ENCODE measurements at regions of chr17 and their contacts with region 1.

Region 1: GRCh38 chr17:5050278-5050677 is 15.1 kb upstream of the SLC52A1 start:
- ATAC-seq: peak in 4 of 8 experiments; percentile 38 to 96 (median 72)
- H3K4me3 ChIP-seq: no peak overlapping the region
- H3K27ac ChIP-seq: no peak overlapping the region
- H3K4me1 ChIP-seq: peaks cover 0 to 10% of the 10 kb centered on the region in 2 donors

Region 2: DNA sequence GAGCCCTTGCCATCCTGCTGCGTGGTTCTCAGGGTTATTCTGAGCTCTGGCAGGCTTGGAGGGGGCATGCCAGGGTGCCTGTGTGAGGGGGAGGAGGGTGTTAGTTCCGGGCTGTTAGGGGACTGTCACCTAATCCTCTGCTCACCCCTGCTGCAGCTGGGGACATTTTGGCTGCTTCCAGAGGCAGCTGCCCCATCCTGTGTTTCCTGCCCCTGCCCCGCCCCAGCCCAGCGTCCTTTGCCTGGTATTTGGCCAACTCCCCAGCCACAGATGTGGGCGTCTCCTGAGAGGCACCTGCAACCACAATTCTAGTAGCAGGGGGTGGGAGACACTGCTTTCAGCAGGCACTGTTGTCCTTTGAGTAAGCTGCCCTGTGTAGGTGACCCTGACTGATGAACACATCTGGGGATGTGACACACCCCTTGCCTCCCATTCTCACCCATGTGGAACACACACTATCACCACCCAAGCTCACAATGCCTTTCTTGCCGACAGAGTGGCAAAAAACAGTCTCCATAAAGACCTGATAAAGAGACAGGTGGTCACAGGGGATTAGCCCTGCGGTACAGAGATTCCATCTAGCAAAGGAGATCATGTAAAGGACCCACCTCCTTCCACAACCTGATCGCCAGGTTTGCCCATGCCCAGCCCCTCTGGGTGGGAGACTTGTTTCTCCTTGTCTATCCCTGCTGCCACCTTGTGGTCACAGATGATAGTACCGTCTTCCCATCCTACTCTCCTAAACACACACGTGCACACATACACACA is 147.0 kb before region 1 on chr17 and contains the start of gene CHRNE:
- in situ Hi-C with region 1: loop called in 2 of 9 experiments (anchors 25 kb)
- ATAC-seq: peak in 6 of 8 experiments; percentile 36 to 65 (median 52)
- H3K4me3 ChIP-seq: peak within 1 kb of the TSS in 1 of 5 donors; percentile 50
- H3K27ac ChIP-seq: no peak within 1 kb of the TSS
- H3K4me1 ChIP-seq: peaks cover 7 to 14% of the 10 kb centered on the region in 2 donors
- total RNA-seq, gene CHRNE: 0.21 to 2.3 (median 0.57) TPM

Region 3: DNA sequence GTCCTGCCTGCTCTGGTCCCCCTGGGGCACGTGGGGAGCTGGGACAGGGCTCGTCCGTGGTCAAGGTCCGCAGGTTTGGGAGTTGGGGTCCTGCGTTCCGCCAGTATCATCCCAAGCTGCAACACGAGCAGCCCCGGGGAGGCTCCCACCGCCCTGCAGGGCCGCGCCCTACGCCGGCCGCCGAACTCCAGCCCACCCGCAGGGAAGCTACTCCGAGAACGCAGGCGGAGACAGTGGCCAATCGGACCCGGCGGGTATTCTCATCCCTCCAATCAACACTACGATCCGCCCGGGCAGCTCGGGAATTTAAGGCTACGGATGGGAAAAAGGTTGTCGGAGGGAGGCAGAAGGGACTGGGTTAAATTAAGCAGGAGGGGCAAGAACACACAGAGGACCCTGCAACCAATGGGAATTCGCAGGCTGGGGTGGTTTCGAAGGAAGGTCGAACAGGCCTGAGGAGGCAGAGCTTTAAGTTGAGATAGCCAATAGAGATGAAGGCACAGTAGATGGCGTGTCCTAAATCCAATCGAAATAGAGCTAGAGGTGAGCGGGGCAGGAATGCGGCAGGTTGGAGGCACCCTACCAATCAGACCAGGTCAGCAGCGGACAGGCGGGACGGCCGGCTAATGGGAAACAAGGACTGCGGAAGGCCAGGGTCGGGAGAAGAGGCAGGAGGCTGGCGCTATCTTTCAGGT is 83.3 kb before region 1 on chr17:
- in situ Hi-C with region 1: loop called in 1 of 9 experiments (anchors 25 kb)
- ATAC-seq: peak; percentile 76 to 89 (median 87)
- H3K4me3 ChIP-seq: peak overlapping the region; percentile 75 to 87 (median 82)
- H3K27ac ChIP-seq: peak overlapping the region; percentile 99
- H3K4me1 ChIP-seq: peaks cover 16 to 25% of the 10 kb centered on the region in 2 donors

Measured in motor neuron (in vitro differentiated cells).